ENCODE measurements at regions of chr9 and their contacts with region 1.

Region 1: GRCh38 chr9:71783120-71783530 is 14.8 kb upstream of the CEMIP2 start:
- DNase-seq: peak; percentile 94
- H3K4me3 Mint-ChIP-seq: peak overlapping the region; percentile 71
- H3K27ac Mint-ChIP-seq: peak overlapping the region; percentile 96
- H3K4me1 Mint-ChIP-seq: peaks cover 43% of the 10 kb centered on the region
- H3K27me3 Mint-ChIP-seq: no peaks in the 10 kb centered on the region

Region 2: GRCh38 chr9:71638627-71639026 is 144.5 kb before region 1 on chr9:
- CTCF ChIA-PET with region 1: no interaction called
- POLR2A ChIA-PET with region 1: no interaction called
- intact Hi-C with region 1: loop called (anchors 5 kb)
- DNase-seq: peak; percentile 33
- H3K4me3 Mint-ChIP-seq: peak overlapping the region; percentile 31
- H3K27ac Mint-ChIP-seq: peak overlapping the region; percentile 1
- H3K4me1 Mint-ChIP-seq: peaks cover 25% of the 10 kb centered on the region
- H3K27me3 Mint-ChIP-seq: no peaks in the 10 kb centered on the region

Region 3: GRCh38 chr9:71748280-71748743 is 34.8 kb before region 1 on chr9:
- CTCF ChIA-PET with region 1: no interaction called
- POLR2A ChIA-PET with region 1: no interaction called
- intact Hi-C with region 1: no loop called
- DNase-seq: no peak
- H3K4me3 Mint-ChIP-seq: no peak overlapping the region
- H3K27ac Mint-ChIP-seq: peak overlapping the region; percentile 51
- H3K4me1 Mint-ChIP-seq: peaks cover 38% of the 10 kb centered on the region
- H3K27me3 Mint-ChIP-seq: no peaks in the 10 kb centered on the region

Region 4: DNA sequence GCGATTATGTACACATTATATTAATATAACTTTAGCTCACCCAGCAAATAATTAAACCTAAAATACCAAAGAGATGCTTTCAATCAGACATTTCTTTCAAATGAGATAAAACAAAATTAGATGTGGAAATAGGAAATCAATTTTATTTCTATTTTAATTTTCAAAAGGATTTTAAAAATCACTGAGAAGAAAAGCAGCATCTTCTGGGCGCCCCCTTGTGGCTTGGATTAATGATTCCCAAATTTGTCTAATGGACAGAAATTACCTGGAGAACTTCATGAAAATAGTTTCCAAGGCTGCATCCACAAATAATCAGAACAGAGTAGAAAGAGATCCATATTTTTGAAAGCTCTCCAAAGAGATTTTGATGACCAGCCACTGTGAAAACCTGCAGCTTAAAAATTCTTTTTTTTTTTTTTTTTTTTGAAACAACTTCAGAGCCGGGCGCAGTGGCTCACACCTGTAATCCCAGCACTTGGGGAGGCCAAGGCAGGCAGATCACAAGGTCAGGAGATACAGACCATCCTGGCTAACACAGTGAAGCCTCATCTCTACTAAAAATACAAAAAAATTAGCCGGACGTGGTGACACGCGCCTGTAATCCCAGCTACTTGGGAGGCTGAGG is 36.1 kb after region 1 on chr9:
- CTCF ChIA-PET with region 1: interaction called, 10 read pairs
- POLR2A ChIA-PET with region 1: no interaction called
- intact Hi-C with region 1: loop called (anchors 1 kb)
- DNase-seq: peak; percentile 23
- H3K4me3 Mint-ChIP-seq: no peak overlapping the region
- H3K27ac Mint-ChIP-seq: no peak overlapping the region
- H3K4me1 Mint-ChIP-seq: peaks cover 12% of the 10 kb centered on the region
- H3K27me3 Mint-ChIP-seq: no peaks in the 10 kb centered on the region

Region 5: DNA sequence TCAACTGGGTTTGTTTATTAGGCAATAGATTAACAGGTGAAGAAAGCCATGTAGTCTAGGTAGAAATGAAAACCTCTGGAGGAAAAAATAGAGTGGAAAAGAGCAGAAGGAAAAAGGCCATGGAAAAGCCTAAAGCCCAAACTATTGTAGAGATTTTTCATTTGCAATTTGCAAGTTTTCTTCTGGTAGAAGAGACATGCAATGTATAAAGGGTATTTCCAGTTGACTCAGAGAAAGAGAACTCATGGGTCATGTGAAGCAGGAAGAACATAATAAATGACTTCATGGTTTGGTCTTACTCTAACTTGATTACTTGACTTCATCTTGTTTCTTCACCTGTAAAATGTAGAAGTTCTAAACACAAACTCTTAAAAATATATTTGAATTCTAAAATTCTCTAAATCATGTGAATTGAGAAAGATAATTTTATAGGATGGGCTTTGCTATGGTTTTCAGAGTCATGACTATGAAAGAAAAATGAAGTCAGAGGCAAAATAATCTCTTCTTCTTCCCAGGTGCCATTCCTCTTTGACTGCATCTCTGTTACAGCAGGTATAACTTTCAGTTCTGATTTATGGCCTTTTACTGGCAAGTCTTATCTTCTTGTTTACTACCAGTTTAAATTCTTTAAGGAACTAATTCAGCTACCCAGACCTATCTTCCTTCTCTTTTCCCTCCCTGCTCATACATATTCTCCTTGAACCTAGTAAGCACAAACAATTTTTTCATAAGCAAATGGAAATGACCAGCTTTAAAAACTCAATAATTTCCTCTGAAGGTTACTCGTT is 690.5 kb after region 1 on chr9:
- CTCF ChIA-PET with region 1: no interaction called
- POLR2A ChIA-PET with region 1: no interaction called
- intact Hi-C with region 1: loop called (anchors 10 kb)
- DNase-seq: no peak
- H3K4me3 Mint-ChIP-seq: no peak overlapping the region
- H3K27ac Mint-ChIP-seq: peak overlapping the region; percentile 79
- H3K4me1 Mint-ChIP-seq: peaks cover 41% of the 10 kb centered on the region
- H3K27me3 Mint-ChIP-seq: no peaks in the 10 kb centered on the region

Region 6: GRCh38 chr9:73149371-73150067 is 1366.4 kb after region 1 on chr9:
- CTCF ChIA-PET with region 1: no interaction called
- POLR2A ChIA-PET with region 1: no interaction called
- intact Hi-C with region 1: loop called (anchors 5 kb)
- DNase-seq: no peak
- H3K4me3 Mint-ChIP-seq: peak overlapping the region; percentile 55
- H3K27ac Mint-ChIP-seq: peak overlapping the region; percentile 86
- H3K4me1 Mint-ChIP-seq: peaks cover 66% of the 10 kb centered on the region
- H3K27me3 Mint-ChIP-seq: no peaks in the 10 kb centered on the region